ENCODE measurements at regions of chr2 and their contacts with region 1.

Region 1: DNA sequence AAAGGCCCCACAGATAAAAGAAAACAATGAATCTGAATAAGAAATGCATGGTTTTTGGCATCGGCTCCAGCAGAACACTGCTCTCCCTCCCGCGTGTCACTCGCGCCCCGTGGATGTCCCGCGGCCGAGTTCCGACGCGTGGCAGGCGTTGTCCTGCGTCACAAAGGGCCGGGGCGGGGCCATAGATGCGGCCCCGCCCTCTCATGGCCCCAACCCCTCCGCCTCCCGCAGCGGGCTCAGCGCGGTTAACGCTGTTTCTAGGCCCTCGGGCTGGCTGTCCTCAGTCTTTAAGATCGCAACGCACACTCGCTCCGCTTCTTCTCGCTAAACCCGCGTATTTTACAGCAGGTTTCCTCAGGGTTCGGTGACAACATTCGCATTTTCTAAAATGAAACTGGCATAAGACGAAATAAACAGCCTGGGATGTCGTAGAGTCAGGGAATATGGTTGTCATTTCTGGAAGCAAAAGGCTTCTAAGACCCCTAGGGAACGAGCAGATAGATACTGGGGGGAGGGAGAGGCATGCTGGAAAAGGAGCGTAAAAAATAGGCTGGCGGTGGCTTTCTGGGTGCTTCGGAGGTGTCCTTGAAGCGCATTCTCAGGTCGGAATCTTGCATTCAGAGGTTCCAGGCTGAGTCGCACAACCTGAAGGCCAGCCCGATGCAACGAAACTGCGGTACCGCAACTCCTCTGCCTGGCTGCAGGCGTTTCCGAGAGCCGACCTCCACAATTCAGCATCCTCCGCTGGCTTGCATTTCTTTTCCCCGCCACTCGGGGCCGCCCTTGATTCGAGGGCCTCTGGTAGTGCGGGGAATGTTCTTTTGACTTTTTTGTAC is at the start of gene FKBP7:
- DNase-seq: peak; percentile 33
- ATAC-seq: peak; percentile 75
- H3K4me3 ChIP-seq: peak within 1 kb of the TSS; percentile 99
- H3K27ac ChIP-seq: peak within 1 kb of the TSS; percentile 88
- H3K4me1 ChIP-seq: peaks cover 7% of the 10 kb centered on the region; the same call in 1 of the 2 replicates
- H3K27me3 ChIP-seq: no peaks in the 10 kb centered on the region
- CTCF ChIP-seq: peak; percentile 89 to 95 (median 91)
- EP300 ChIP-seq: peak in 1 of 2 experiments; percentile 43; a peak in 1 of 4 replicates
- POLR2A ChIP-seq: peak; percentile 80
- RAD21 ChIP-seq: peak; percentile 92
- polyA plus RNA-seq, gene FKBP7: 16.6 to 16.7 TPM

Region 2: DNA sequence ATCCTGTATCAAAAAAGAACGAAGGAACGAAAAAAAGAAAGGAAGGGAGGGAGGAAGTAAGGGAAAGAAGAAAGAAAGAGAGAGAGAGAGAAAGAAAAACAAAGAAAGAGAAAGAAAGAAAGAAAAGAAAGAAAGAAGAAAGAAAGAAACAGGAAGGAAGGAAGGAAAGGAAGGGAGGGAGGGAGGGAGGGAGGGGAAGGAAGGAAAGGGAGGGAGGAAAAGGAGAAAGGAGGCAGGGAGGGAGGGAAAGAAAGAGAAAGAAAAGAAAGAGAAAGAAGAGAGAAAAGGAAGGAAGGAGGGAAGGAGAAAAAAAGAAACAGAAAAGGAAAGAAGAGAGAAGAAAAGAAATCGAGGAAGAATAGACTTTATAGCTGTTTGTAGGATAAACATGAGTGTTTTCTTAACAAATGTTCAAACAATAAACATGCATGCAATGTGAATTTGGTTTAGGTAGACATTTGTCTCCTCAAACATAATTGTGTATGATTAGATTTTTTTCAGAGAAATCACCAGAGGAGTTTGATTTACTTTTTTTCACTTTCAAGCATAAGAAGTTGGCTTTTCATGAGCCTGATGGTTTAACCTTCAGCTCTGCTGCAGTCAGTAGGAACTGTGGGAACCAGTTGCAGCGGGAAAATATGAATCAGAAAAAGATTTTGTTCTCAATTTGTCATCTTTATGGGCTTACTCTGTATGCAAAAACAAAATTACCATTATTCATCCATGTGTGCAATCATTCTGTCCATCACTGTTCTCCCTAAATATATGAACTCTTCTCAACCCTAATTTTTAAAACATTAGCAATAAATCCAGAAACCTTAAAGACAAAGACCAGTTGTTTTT is 99.3 kb before region 1 on chr2:
- CTCF ChIA-PET with region 1: no interaction called
- POLR2A ChIA-PET with region 1: no interaction called
- RAD21 ChIA-PET with region 1: no interaction called
- SMC1A ChIA-PET with region 1: no interaction called
- in situ Hi-C with region 1: no loop called
- intact Hi-C with region 1: no loop called
- DNase-seq: no peak
- ATAC-seq: no peak
- H3K4me3 ChIP-seq: no peak overlapping the region
- H3K27ac ChIP-seq: no peak overlapping the region
- H3K4me1 ChIP-seq: no peaks in the 10 kb centered on the region
- H3K27me3 ChIP-seq: no peaks in the 10 kb centered on the region; a peak in 2 of 4 replicates
- CTCF ChIP-seq: no peak
- EP300 ChIP-seq: no peak
- POLR2A ChIP-seq: no peak
- RAD21 ChIP-seq: no peak

Region 3: GRCh38 chr2:178450774-178451525 is 27.7 kb before region 1 on chr2 and contains the starts of genes PJVK and PRKRA:
- CTCF ChIA-PET with region 1: interaction called, 4 read pairs
- POLR2A ChIA-PET with region 1: interaction called, 19 read pairs
- RAD21 ChIA-PET with region 1: interaction called, 8 read pairs
- SMC1A ChIA-PET with region 1: interaction called, 7 read pairs
- in situ Hi-C with region 1: no loop called
- intact Hi-C with region 1: loop called (anchors 1 kb)
- DNase-seq: peak; percentile 81
- ATAC-seq: peak; percentile 91
- H3K4me3 ChIP-seq: peak within 1 kb of the TSS; percentile 94
- H3K27ac ChIP-seq: peak within 1 kb of the TSS; percentile 94
- H3K4me1 ChIP-seq: peaks cover 9% of the 10 kb centered on the region
- H3K27me3 ChIP-seq: no peaks in the 10 kb centered on the region
- CTCF ChIP-seq: no peak
- EP300 ChIP-seq: 0 out of 4 replicates have a peak, but pooled peaks of 1 of the 2 experiments have one; percentile 2
- POLR2A ChIP-seq: peak; percentile 95
- RAD21 ChIP-seq: no peak
- polyA plus RNA-seq, gene PJVK: 2.1 to 3.0 TPM
- polyA plus RNA-seq, gene PRKRA: 19.1 to 25.1 TPM

Region 4: DNA sequence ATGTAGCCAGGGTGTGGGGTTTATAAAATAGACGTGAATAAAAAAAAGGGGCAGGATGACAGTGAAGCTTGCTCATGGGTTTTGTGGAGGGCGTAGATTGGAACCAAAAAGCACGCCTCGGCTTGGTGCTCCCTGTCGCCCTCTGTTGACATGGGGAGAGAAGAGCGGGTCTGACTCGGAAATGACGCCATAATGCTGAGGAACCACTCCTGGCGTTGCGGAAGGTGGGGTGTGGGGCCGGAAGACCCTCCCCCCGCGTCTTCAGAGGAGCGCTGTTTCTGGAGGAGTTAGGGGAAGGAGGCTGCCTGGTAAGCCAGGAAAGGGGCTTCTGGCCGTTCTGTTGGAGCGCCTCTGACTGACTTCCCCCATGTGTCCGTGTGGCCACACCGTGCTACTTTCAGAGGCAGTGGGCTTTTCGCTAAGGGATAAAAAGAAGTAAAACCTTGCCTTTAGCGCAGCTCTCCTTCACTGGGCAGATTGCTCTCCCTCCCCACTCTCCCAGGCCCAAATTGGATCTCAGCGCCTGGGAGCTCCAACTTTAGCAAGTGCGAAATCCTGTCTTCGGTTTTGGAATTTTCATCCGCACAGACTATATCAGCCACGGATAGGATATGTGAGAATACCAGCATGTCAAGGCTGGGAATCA is 44.4 kb after region 1 on chr2:
- CTCF ChIA-PET with region 1: interaction called, 15 read pairs
- POLR2A ChIA-PET with region 1: interaction called, 14 read pairs
- RAD21 ChIA-PET with region 1: interaction called, 29 read pairs
- SMC1A ChIA-PET with region 1: interaction called, 21 read pairs
- in situ Hi-C with region 1: no loop called
- intact Hi-C with region 1: loop called (anchors 2 kb)
- DNase-seq: peak; percentile 57
- ATAC-seq: peak; percentile 91
- H3K4me3 ChIP-seq: peak overlapping the region; percentile 80
- H3K27ac ChIP-seq: peak overlapping the region; percentile 74
- H3K4me1 ChIP-seq: peaks cover 11% of the 10 kb centered on the region; the same call in 1 of the 2 replicates
- H3K27me3 ChIP-seq: no peaks in the 10 kb centered on the region
- CTCF ChIP-seq: peak; percentile 77 to 93 (median 87)
- EP300 ChIP-seq: no peak
- POLR2A ChIP-seq: peak; percentile 88
- RAD21 ChIP-seq: peak; percentile 43

Region 5: DNA sequence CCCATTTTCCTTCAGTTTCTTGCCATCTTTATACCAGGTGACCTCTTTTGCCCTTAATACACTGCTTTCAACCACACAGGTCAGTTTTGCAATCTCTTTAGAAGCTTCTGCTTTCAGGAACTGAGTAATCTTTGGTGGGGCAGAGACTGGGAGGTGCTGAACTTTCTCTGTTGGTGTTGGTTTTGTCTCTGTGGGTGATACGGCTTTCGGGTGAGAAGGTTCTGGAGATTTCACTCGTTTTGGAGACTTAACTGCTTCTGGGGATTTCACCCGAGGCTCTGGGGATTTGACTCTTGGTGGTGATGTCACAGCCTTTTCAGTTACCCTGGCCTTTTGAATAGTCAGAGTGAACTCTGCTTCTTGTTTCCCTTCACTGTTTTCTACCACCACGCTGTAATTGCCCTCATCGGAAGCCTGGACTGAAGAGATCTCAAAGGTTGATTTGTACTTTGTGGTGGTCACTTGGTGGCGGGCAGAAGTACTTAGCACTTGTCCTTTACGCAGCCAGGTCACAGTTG is 52.0 kb after region 1 on chr2:
- CTCF ChIA-PET with region 1: interaction called, 15 read pairs
- POLR2A ChIA-PET with region 1: interaction called, 14 read pairs
- RAD21 ChIA-PET with region 1: interaction called, 29 read pairs
- SMC1A ChIA-PET with region 1: interaction called, 21 read pairs
- in situ Hi-C with region 1: no loop called
- intact Hi-C with region 1: loop called (anchors 1 kb)
- DNase-seq: peak; percentile 96
- ATAC-seq: peak; percentile 91
- H3K4me3 ChIP-seq: peak overlapping the region; percentile 54
- H3K27ac ChIP-seq: peak overlapping the region; percentile 84
- H3K4me1 ChIP-seq: peaks cover 33% of the 10 kb centered on the region
- H3K27me3 ChIP-seq: no peaks in the 10 kb centered on the region
- CTCF ChIP-seq: no peak
- EP300 ChIP-seq: peak; percentile 86 to 89; a peak in 3 of 4 replicates
- POLR2A ChIP-seq: peak; percentile 43; the same call in 1 of the 2 replicates
- RAD21 ChIP-seq: peak; percentile 25; the same call in 1 of the 2 replicates

Region 6: GRCh38 chr2:178700922-178701342 is 222.3 kb after region 1 on chr2:
- CTCF ChIA-PET with region 1: interaction called, 4 read pairs
- POLR2A ChIA-PET with region 1: no interaction called
- RAD21 ChIA-PET with region 1: interaction called, 3 read pairs
- SMC1A ChIA-PET with region 1: interaction called, 4 read pairs
- in situ Hi-C with region 1: no loop called
- intact Hi-C with region 1: loop called (anchors 5 kb)
- DNase-seq: no peak
- ATAC-seq: peak; percentile 55
- H3K4me3 ChIP-seq: no peak overlapping the region
- H3K27ac ChIP-seq: no peak overlapping the region
- H3K4me1 ChIP-seq: no peaks in the 10 kb centered on the region
- H3K27me3 ChIP-seq: no peaks in the 10 kb centered on the region
- CTCF ChIP-seq: peak; percentile 69 to 94 (median 87)
- EP300 ChIP-seq: no peak
- POLR2A ChIP-seq: no peak
- RAD21 ChIP-seq: peak; percentile 42; the same call in 1 of the 2 replicates